ENCODE measurements at regions of chr3 and their contacts with region 1.

Region 1: DNA sequence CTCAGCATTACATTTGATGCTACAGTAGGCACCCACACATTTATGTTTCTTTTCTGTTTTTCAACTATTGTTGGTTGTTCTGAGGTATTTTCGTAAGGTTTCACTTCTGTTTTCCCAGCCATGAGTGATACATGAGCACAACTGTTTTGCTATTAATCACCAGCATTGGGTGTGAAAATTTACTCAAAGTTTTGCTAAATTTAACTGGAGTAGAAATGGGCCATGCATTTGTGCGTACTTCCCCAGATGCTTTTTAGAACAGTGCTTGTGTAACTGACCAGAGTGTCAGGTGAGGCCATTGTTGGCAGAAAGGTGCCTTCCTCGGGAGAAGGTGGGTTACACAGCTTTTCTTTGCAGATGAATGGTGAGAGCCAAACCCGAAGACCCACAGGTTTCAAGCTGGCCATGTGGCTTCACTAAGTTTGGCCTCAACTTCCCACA is 70.4 kb downstream of the ST6GAL1 start:
- DNase-seq: peak; percentile 63
- H3K4me3 Mint-ChIP-seq: peak overlapping the region; percentile 5
- H3K27ac Mint-ChIP-seq: peak overlapping the region; percentile 87
- H3K4me1 Mint-ChIP-seq: peaks cover 76% of the 10 kb centered on the region
- H3K27me3 Mint-ChIP-seq: no peaks in the 10 kb centered on the region

Region 2: GRCh38 chr3:186798239-186798874 is 202.4 kb before region 1 on chr3:
- CTCF ChIA-PET with region 1: no interaction called
- POLR2A ChIA-PET with region 1: no interaction called
- intact Hi-C with region 1: no loop called
- DNase-seq: no peak
- H3K4me3 Mint-ChIP-seq: no peak overlapping the region
- H3K27ac Mint-ChIP-seq: no peak overlapping the region
- H3K4me1 Mint-ChIP-seq: peaks cover 20% of the 10 kb centered on the region
- H3K27me3 Mint-ChIP-seq: no peaks in the 10 kb centered on the region

Region 3: DNA sequence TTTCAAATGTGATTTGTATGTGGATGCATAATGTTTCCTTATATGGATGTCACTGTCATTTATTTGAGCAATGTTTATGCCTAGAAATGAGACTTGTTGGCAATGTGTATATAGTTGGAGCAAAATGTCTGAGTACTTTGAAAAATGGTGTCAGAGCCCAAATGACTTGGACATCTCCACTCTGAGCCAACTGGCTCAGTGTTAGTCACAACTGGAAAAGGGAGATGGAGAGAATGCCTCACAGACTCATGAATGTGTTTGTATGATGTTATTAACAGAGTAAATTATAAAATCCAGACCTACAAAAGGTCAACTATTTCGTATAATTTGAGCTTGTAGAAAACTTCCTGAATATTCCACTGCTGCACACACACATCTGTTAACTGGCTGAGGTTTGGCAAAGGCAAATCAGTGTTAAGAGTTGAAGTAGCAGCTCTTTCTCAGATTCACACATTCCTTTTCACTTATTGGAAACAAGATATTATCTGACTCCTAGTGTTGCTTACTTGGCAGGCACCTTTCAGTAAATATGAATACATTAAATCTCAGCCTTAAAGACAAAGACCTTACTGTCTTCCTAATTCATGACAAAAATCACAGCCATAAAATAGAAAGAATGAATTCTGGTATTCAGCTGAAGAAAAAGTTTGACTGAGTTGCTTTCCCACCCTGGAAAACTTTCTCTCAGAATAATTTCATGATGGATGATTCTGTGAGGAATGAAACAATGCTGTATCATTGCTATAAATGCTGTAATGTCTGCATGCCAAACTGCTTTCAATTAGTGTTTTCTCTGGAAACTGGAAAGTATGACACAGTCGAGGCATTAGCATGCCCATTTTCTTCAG is 131.3 kb before region 1 on chr3:
- CTCF ChIA-PET with region 1: no interaction called
- POLR2A ChIA-PET with region 1: no interaction called
- intact Hi-C with region 1: loop called (anchors 5 kb)
- DNase-seq: peak; percentile 28
- H3K4me3 Mint-ChIP-seq: no peak overlapping the region
- H3K27ac Mint-ChIP-seq: peak overlapping the region; percentile 82
- H3K4me1 Mint-ChIP-seq: peaks cover 35% of the 10 kb centered on the region
- H3K27me3 Mint-ChIP-seq: no peaks in the 10 kb centered on the region

Region 4: GRCh38 chr3:186920301-186920700 is 80.4 kb before region 1 on chr3:
- CTCF ChIA-PET with region 1: no interaction called
- POLR2A ChIA-PET with region 1: no interaction called
- intact Hi-C with region 1: no loop called
- DNase-seq: no peak
- H3K4me3 Mint-ChIP-seq: no peak overlapping the region
- H3K27ac Mint-ChIP-seq: no peak overlapping the region
- H3K4me1 Mint-ChIP-seq: peaks cover 19% of the 10 kb centered on the region
- H3K27me3 Mint-ChIP-seq: no peaks in the 10 kb centered on the region

Region 5: GRCh38 chr3:186985661-186986364 is 14.9 kb before region 1 on chr3:
- CTCF ChIA-PET with region 1: interaction called, 4 read pairs
- POLR2A ChIA-PET with region 1: no interaction called
- intact Hi-C with region 1: loop called (anchors 1 kb)
- DNase-seq: no peak
- H3K4me3 Mint-ChIP-seq: no peak overlapping the region
- H3K27ac Mint-ChIP-seq: no peak overlapping the region
- H3K4me1 Mint-ChIP-seq: peaks cover 41% of the 10 kb centered on the region
- H3K27me3 Mint-ChIP-seq: no peaks in the 10 kb centered on the region

Region 6: DNA sequence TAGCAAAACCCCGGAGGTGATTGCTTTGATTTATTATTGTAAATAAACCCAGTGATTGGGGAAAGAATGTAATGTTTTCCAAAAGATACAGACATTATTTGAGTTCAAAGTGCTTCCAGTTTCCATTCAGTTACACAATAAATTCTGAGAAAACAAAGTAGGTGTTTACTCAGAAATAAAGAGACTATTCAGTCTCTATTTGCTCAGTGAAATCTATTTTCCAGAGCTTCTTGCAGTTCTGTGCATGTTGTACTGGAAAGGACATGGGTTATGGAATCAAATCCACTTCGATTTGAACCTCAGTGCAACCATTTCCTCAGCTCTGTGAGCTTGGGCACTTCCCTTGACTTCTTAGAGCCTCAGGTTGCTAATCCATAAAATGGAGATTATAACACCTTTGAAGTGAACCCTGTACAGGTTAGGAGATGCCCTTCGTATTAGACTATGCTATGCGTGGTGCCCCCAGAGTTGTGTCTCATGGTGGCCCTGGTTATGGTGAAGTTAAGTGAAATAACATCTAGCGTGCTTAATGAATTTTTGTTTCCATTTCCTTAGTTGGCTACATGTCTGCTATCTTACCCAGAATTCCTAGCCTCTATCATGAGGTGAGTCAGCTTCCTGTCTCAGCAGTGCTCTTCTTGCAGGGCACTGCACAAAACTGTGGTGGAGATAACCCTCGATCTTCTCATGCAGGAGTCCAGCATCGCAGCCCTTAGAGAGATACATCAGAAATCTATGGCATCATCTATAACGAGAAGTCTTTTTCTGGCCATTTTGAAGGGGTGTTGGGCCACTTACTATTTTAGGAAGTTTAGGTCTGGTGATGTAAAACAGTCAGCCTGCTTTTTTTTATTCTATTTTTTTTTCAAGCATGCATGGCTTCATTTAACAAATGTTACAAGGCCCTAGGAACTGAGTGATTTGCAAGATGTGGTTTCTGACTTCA is 40.9 kb after region 1 on chr3:
- CTCF ChIA-PET with region 1: no interaction called
- POLR2A ChIA-PET with region 1: no interaction called
- intact Hi-C with region 1: loop called (anchors 1 kb)
- DNase-seq: peak; percentile 70
- H3K4me3 Mint-ChIP-seq: peak overlapping the region; percentile 47
- H3K27ac Mint-ChIP-seq: peak overlapping the region; percentile 92
- H3K4me1 Mint-ChIP-seq: peaks cover 82% of the 10 kb centered on the region
- H3K27me3 Mint-ChIP-seq: no peaks in the 10 kb centered on the region